Activated T-helper 1 cell treated with anti-CD3 and anti-CD28 coated beads, Interleukin-12 subunit alpha, Interleukin-12 subunit beta, Interleukin-2, Interleukin-4 antibody, amounts not matched to agents 30 ng/mL and 10 ng/mL and 1 ng/mL, durations not matched to agents 14 hours and 24 hours and 36 hours (primary cell): ENCODE measurements at regions of chr18 and their contacts with region 1.

Region 1: GRCh38 chr18:24054130-24054529 is 39.6 kb downstream of the TTC39C start:
- DNase-seq: no peak
- H3K4me3 Mint-ChIP-seq: peak overlapping the region; percentile 12
- H3K27ac Mint-ChIP-seq: peak overlapping the region; percentile 74
- H3K4me1 Mint-ChIP-seq: peaks cover 76% of the 10 kb centered on the region
- H3K27me3 Mint-ChIP-seq: no peaks in the 10 kb centered on the region

Region 2: GRCh38 chr18:23828426-23828825 is 225.7 kb before region 1 on chr18:
- intact Hi-C with region 1: loop called (anchors 1 kb)
- DNase-seq: peak; percentile 49
- H3K4me3 Mint-ChIP-seq: no peak overlapping the region
- H3K27ac Mint-ChIP-seq: peak overlapping the region; percentile 89
- H3K4me1 Mint-ChIP-seq: peaks cover 52% of the 10 kb centered on the region
- H3K27me3 Mint-ChIP-seq: peaks cover 4% of the 10 kb centered on the region

Region 3: DNA sequence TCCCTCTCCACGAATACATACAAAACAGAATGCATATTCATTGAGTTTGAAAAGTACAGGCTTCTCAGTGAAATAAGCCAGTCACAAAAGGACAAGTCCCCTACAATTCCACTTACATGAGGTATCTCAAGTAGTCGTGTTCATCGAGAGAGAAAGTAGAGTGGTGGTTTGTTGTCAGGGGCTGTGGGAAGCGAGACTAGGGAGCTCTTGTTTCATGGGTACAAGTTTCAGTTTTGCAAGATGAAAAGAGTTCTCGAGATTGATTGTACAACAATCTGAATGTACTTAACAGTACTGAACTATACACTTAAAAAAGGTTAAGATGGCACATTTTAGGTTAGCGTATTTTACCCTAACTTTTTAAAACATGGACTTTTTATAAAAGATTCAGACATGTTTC is 111.0 kb before region 1 on chr18:
- intact Hi-C with region 1: loop called (anchors 1 kb)
- DNase-seq: no peak
- H3K4me3 Mint-ChIP-seq: peak overlapping the region; percentile 3
- H3K27ac Mint-ChIP-seq: no peak overlapping the region
- H3K4me1 Mint-ChIP-seq: peaks cover 26% of the 10 kb centered on the region
- H3K27me3 Mint-ChIP-seq: peaks cover 33% of the 10 kb centered on the region

Region 4: GRCh38 chr18:24019641-24020331 is 34.3 kb before region 1 on chr18:
- intact Hi-C with region 1: loop called (anchors 1 kb)
- DNase-seq: peak; percentile 71
- H3K4me3 Mint-ChIP-seq: peak overlapping the region; percentile 80
- H3K27ac Mint-ChIP-seq: peak overlapping the region; percentile 92
- H3K4me1 Mint-ChIP-seq: peaks cover 90% of the 10 kb centered on the region
- H3K27me3 Mint-ChIP-seq: no peaks in the 10 kb centered on the region